CD8-positive, alpha-beta memory T cell (primary cell): ENCODE measurements at regions of chr7 and their contacts with region 1.

Region 1: DNA sequence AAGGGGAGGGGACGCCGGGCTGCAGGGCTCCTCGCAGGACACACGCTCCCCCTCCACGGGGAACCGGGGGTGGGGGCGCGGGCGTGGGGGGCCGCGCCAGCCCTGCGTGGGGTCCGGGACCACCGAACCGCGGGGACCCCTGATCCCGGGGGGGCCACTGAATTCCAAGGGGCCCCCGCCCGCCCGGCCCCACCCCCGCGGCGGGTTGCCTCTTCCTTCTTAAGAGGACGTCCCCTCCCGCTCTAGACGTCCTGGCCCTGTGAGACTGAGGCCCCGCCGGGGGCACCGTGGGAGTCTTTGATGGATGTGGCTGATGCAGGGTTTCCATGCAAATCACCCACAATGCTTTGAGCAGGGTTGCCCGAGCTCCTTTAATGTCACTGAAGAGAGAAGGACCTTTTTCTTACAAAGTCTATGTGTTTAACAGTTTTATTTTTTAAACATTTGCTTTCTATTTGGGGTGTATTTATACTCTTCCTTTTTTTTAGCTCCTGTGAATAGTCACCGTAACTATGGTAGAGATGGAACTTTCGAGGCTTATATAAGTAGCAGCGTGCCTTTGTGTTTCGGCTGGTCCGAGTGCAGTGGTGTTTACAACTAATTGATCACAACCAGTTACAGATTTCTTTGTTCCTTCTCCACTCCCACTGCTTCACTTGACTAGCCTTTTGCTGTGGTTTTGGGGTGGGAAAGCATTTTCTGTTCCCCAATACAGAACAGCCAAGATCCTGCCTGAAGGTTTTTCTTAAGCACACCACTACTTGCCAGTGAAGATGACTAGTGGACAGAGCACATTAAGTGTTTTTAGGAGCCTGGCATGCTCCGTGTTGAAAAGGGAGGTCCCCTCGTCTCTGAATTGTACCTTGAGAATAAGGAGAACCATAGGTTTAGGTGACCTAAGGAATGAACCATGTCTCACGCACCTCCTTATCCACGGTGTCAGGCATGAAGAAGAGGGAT is 44.8 kb downstream of the PDIA4 start:
- DNase-seq: peak; percentile 77 to 89 (median 83)
- H3K4me3 ChIP-seq: peak overlapping the region; percentile 62
- H3K4me3 Mint-ChIP-seq: peak overlapping the region; percentile 86 to 97 (median 94)
- H3K27ac ChIP-seq: peak overlapping the region; percentile 53
- H3K27ac Mint-ChIP-seq: peak overlapping the region; percentile 88 to 96 (median 96)
- H3K4me1 ChIP-seq: peaks cover 29% of the 10 kb centered on the region
- H3K4me1 Mint-ChIP-seq: peaks cover 56 to 76% (median 65%) of the 10 kb centered on the region in 3 donors
- H3K27me3 ChIP-seq: no peaks in the 10 kb centered on the region
- H3K27me3 Mint-ChIP-seq: peaks cover 0 to 7% of the 10 kb centered on the region in 2 donors

Region 2: GRCh38 chr7:148972375-148972774 is 11.1 kb before region 1 on chr7:
- CTCF ChIA-PET with region 1: interaction called, 12 read pairs
- POLR2A ChIA-PET with region 1: interaction called, 5 read pairs
- DNase-seq: no peak
- H3K4me3 ChIP-seq: no peak overlapping the region
- H3K4me3 Mint-ChIP-seq: no peak overlapping the region
- H3K27ac ChIP-seq: no peak overlapping the region
- H3K27ac Mint-ChIP-seq: no peak overlapping the region
- H3K4me1 ChIP-seq: no peaks in the 10 kb centered on the region
- H3K4me1 Mint-ChIP-seq: no peaks in the 10 kb centered on the region
- H3K27me3 ChIP-seq: no peaks in the 10 kb centered on the region
- H3K27me3 Mint-ChIP-seq: peaks cover 2 to 5% of the 10 kb centered on the region in 2 donors

Region 3: GRCh38 chr7:149133028-149133705 is 149.7 kb after region 1 on chr7:
- CTCF ChIA-PET with region 1: no interaction called
- POLR2A ChIA-PET with region 1: no interaction called
- DNase-seq: no peak
- H3K4me3 ChIP-seq: no peak overlapping the region
- H3K4me3 Mint-ChIP-seq: no peak overlapping the region
- H3K27ac ChIP-seq: no peak overlapping the region
- H3K27ac Mint-ChIP-seq: no peak overlapping the region
- H3K4me1 ChIP-seq: no peaks in the 10 kb centered on the region
- H3K4me1 Mint-ChIP-seq: peaks cover 0 to 2% (median 1%) of the 10 kb centered on the region in 3 donors
- H3K27me3 ChIP-seq: no peaks in the 10 kb centered on the region
- H3K27me3 Mint-ChIP-seq: no peaks in the 10 kb centered on the region